ENCODE measurements at regions of chr12 and their contacts with region 1.

Region 1: GRCh38 chr12:76455582-76456345 is 103.8 kb downstream of the OSBPL8 start:
- DNase-seq: peak; percentile 90
- ATAC-seq: peak; percentile 84
- H3K4me3 ChIP-seq: 0 out of 4 replicates have a peak overlapping the region, but pooled peaks of 1 of the 2 experiments have one; percentile 3
- H3K27ac ChIP-seq: peak overlapping the region; percentile 81
- H3K4me1 ChIP-seq: peaks cover 42 to 60% of the 10 kb centered on the region in 2 experiments
- H3K27me3 ChIP-seq: no peaks in the 10 kb centered on the region
- CTCF ChIP-seq: peak; percentile 57 to 82 (median 74)
- POLR2A ChIP-seq: peak; percentile 78
- RAD21 ChIP-seq: peak; percentile 96

Region 2: DNA sequence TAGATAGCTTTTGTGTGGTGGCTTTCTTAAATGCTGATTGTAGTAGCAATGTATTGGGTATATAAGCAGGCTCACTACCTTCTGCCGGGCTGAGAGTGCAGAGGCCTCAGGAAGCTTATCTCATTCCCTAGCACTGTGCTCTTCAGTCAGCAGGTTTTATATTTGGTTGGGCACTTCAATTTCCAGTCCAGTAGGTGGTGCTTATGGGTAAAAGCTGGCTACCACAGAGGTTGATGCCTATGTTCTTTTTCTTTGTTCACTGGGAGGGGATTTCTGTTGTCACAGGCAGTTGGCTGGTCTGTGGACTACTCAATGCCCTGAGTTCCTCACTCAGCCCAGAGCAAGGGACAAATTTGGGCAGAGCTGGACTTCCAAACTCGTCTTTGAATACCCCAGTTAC is 1018.2 kb before region 1 on chr12:
- CTCF ChIA-PET with region 1: no interaction called
- POLR2A ChIA-PET with region 1: no interaction called
- RAD21 ChIA-PET with region 1: no interaction called
- intact Hi-C with region 1: no loop called
- DNase-seq: no peak
- ATAC-seq: peak; percentile 65
- H3K4me3 ChIP-seq: no peak overlapping the region
- H3K27ac ChIP-seq: no peak overlapping the region
- H3K4me1 ChIP-seq: no peaks in the 10 kb centered on the region
- H3K27me3 ChIP-seq: no peaks in the 10 kb centered on the region
- CTCF ChIP-seq: peak in 1 of 3 experiments; percentile 14; a peak in 1 of 6 replicates
- POLR2A ChIP-seq: no peak
- RAD21 ChIP-seq: peak; percentile 3; the same call in 1 of the 2 replicates

Region 3: GRCh38 chr12:75511116-75512048 is 944.4 kb before region 1 on chr12 and contains the start of gene KRR1:
- CTCF ChIA-PET with region 1: interaction called, 3 read pairs
- POLR2A ChIA-PET with region 1: no interaction called
- RAD21 ChIA-PET with region 1: no interaction called
- intact Hi-C with region 1: loop called (anchors 5 kb)
- DNase-seq: peak; percentile 99
- ATAC-seq: peak; percentile 99
- H3K4me3 ChIP-seq: peak within 1 kb of the TSS; percentile 77 to 90
- H3K27ac ChIP-seq: peak within 1 kb of the TSS; percentile 61
- H3K4me1 ChIP-seq: peaks cover 19 to 32% of the 10 kb centered on the region in 2 experiments
- H3K27me3 ChIP-seq: no peaks in the 10 kb centered on the region
- CTCF ChIP-seq: 0 out of 6 replicates have a peak, but pooled peaks of 1 of the 3 experiments have one; percentile 3
- POLR2A ChIP-seq: peak; percentile 27
- RAD21 ChIP-seq: peak; percentile 21; the same call in 1 of the 2 replicates
- total RNA-seq, gene KRR1: 192 TPM

Region 4: DNA sequence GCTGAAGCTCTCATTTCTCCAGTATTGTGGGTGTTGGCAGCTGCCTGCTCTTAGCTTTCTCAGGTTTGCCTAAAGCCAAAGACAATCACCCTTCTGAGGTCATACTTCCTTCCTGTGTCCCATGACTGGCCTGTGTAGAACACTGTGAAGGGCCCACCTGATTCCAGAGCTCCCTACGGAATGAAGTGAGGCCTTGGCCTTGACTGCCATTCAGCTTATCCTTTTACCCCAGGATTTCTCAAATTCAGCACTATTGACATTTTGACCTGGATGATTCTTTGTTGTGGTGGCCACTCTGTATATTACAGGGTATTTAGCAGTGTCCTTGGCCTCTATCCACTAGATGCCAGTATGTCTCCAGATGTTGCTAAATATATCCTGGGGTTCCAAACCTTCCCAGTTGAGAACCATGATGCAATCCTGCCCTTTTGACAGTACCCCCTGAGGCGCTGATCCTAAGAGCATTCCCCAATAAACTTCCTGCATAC is 832.1 kb before region 1 on chr12:
- CTCF ChIA-PET with region 1: no interaction called
- POLR2A ChIA-PET with region 1: no interaction called
- RAD21 ChIA-PET with region 1: interaction called, 3 read pairs
- intact Hi-C with region 1: loop called (anchors 5 kb)
- DNase-seq: peak; percentile 89
- ATAC-seq: peak; percentile 92
- H3K4me3 ChIP-seq: no peak overlapping the region
- H3K27ac ChIP-seq: peak overlapping the region; percentile 99
- H3K4me1 ChIP-seq: peaks cover 39 to 70% of the 10 kb centered on the region in 2 experiments
- H3K27me3 ChIP-seq: no peaks in the 10 kb centered on the region
- CTCF ChIP-seq: peak; percentile 49 to 64 (median 51); a peak in 5 of 6 replicates
- POLR2A ChIP-seq: peak; percentile 26
- RAD21 ChIP-seq: peak; percentile 81

Region 5: GRCh38 chr12:76031537-76032073 is 424.2 kb before region 1 on chr12 and contains the start of gene PHLDA1:
- CTCF ChIA-PET with region 1: no interaction called
- POLR2A ChIA-PET with region 1: no interaction called
- RAD21 ChIA-PET with region 1: no interaction called
- intact Hi-C with region 1: loop called (anchors 10 kb)
- DNase-seq: peak; percentile 77
- ATAC-seq: peak; percentile 70
- H3K4me3 ChIP-seq: peak within 1 kb of the TSS; percentile 75
- H3K27ac ChIP-seq: peak within 1 kb of the TSS; percentile 88
- H3K4me1 ChIP-seq: peaks cover 23 to 59% of the 10 kb centered on the region in 2 experiments
- H3K27me3 ChIP-seq: no peaks in the 10 kb centered on the region
- CTCF ChIP-seq: peak in 1 of 3 experiments; percentile 22; a peak in 1 of 6 replicates
- POLR2A ChIP-seq: peak; percentile 67
- RAD21 ChIP-seq: no peak; the same call in 1 of the 2 replicates
- total RNA-seq, gene PHLDA1: 231 TPM

Region 6: DNA sequence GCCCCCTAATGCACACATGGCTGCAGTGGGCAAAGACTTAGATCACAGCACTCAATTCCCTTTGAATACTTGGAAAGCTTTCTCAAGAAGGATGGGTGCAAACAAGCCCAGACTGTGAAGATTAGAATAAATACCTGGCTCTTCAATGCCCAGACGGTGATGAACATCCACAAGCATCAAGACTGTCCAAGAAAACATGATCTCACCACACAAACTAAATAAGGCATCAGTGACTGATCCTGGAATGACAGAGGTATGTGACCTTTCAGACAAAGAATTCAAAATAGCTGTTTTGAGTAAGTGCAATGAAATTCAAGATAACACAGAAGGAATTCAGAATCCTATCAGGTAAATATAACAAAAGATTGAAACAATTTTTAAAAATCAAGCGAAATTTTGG is 264.3 kb after region 1 on chr12:
- CTCF ChIA-PET with region 1: no interaction called
- POLR2A ChIA-PET with region 1: no interaction called
- RAD21 ChIA-PET with region 1: no interaction called
- intact Hi-C with region 1: no loop called
- DNase-seq: no peak
- ATAC-seq: no peak
- H3K4me3 ChIP-seq: no peak overlapping the region
- H3K27ac ChIP-seq: no peak overlapping the region
- H3K4me1 ChIP-seq: peaks cover 0 to 6% of the 10 kb centered on the region in 2 experiments; a peak in 1 of 4 replicates
- H3K27me3 ChIP-seq: no peaks in the 10 kb centered on the region
- CTCF ChIP-seq: no peak
- POLR2A ChIP-seq: no peak
- RAD21 ChIP-seq: no peak